PC-9 (cell line): ENCODE measurements at regions of chr19 and their contacts with region 1.

Region 1: DNA sequence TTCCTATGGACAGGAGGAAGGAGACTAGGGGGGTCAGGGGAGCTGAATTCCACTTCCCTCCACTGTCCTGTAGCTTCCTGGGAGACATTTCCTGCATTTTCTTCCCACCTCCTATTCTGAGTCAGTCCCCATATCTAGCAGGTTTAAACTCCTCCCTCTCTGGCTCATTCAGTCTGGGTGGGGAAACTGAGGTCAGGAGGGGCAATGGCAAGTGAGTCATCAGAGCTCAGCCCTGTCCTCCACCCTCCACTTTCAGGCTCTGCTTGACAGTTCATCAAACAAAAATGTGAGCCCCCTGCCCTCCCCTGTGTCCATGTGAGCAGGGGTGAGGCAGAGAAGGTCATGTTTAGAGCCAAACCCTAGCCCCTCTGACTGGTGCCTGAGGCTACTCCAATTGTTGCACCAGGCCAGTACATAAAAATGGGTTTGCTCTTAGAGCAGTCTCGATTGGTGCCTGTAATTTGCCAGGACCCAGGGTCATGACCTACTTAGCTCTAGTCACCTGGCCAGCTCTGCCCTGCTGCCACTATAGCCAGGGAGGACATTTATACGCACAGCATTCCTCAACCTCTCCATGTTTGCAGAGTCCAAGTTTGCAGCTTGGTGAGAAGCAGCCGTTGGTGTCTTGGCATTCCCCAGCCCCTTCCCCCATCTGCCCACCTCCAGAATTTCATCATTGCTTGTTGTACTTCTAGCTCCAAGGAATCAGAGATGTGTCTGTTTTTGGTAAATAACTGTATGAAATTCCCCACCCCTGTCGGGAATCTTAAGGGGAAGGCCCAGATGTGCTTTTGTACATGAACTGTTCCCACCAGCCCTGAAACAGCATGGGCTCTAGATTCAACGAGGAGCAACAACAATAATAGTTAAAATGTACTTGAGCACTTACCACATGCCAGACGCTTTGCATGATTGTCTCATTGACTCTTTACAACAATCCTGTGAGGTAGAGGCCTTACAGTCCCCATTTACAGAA is 20.7 kb downstream of the SAMD4B start:
- DNase-seq: peak; percentile 45 to 47
- H3K4me3 ChIP-seq: no peak overlapping the region
- H3K27ac ChIP-seq: peak overlapping the region; percentile 65
- H3K4me1 ChIP-seq: peaks cover 20% of the 10 kb centered on the region
- H3K27me3 ChIP-seq: no peaks in the 10 kb centered on the region
- CTCF ChIP-seq: no peak

Region 2: DNA sequence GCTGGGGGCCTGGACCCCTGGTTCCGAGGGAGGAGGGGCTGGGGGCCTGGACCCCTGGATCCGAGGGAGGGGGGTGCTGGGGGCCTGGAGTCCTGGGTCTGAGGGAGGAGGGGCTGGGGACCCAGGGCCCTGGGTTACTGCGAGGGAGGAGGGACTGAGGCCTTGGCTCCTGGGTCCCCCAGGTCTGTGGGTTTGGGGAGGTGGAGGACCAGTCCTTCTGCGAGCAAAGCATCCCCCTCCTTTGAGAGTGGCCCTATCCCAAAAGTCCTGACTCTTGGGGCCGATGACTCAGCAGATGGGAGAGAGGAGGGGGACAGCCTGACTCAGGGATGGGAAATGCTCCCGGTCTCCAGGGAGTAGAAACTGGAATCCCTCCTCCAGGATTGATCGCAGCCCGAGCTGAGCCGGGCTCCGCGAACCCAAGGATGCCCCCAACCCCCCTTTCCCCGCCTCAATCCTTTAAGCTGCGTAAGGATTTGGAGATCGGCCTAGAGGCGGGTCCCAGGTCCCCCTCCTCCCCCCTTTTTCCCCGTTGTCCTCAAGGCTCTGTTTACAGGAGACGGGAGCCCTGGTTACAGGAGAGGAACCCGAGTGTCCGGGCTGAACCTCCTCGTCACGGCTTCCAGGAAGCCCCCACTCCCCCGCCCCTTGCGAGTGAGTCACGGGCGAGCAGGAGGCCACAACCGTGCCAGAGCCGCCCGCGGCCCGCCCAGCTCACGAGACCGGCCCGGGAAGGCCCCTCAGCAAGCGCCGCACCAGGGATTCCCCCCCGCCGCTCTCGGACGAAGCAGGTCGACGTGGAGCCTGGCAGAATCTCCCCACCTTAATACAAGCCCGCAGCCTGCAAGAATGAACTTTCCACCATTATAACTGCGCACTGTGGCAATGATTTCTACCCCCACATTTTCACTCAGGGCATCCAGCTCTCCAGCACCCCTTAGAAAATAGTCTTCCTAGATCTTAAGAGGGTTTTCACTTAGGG is 40.7 kb after region 1 on chr19:
- CTCF ChIA-PET with region 1: no interaction called
- POLR2A ChIA-PET with region 1: interaction called, 14 read pairs
- intact Hi-C with region 1: no loop called
- DNase-seq: peak; percentile 93 to 99
- H3K4me3 ChIP-seq: peak overlapping the region; percentile 82
- H3K27ac ChIP-seq: peak overlapping the region; percentile 98
- H3K4me1 ChIP-seq: peaks cover 51% of the 10 kb centered on the region
- H3K27me3 ChIP-seq: no peaks in the 10 kb centered on the region
- CTCF ChIP-seq: no peak